ENCODE measurements at regions of chr9 and their contacts with region 1.

Region 1: DNA sequence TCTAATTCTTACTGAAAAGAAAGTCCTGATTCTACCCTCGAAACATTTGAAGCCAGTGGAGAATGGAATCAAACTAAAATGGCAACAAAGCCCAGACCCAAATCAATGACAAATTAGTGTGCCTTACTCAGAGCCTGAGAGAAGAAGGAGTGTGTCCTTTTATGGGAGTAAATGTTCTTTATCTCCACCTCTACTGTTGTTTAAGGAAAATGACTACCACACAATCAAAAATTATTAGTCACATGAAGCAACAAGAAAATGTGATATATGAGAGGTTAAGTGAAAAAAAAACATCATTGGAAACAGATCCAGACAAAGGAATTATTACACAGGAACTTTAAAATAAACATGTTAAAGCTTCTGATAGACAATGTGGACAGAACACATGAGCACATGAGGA is 49.7 kb upstream of the FOXB2 start:
- DNase-seq: no peak
- H3K4me3 ChIP-seq: no peak overlapping the region
- H3K27ac ChIP-seq: no peak overlapping the region
- H3K4me1 ChIP-seq: no peaks in the 10 kb centered on the region
- H3K27me3 ChIP-seq: no peaks in the 10 kb centered on the region
- CTCF ChIP-seq: no peak
- EP300 ChIP-seq: no peak
- POLR2A ChIP-seq: no peak

Region 2: GRCh38 chr9:78348848-78349247 is 1379.1 kb after region 1 on chr9:
- intact Hi-C with region 1: loop called in 1 of 4 experiments (anchors 5 kb)
- DNase-seq: no peak
- H3K4me3 ChIP-seq: no peak overlapping the region
- H3K27ac ChIP-seq: no peak overlapping the region
- H3K4me1 ChIP-seq: no peaks in the 10 kb centered on the region
- H3K27me3 ChIP-seq: no peaks in the 10 kb centered on the region
- CTCF ChIP-seq: no peak
- EP300 ChIP-seq: no peak
- POLR2A ChIP-seq: no peak